Activated CD4-positive, alpha-beta memory T cell treated with anti-CD3 and anti-CD28 coated beads, Interleukin-2, amount 10 ng/mL, durations not matched to agents 7 days and 5 days (primary cell): ENCODE measurements at regions of chr11 and their contacts with region 1.

Region 1: GRCh38 chr11:48109046-48109666 is 107.5 kb upstream of the OR4B1 start:
- DNase-seq: no peak
- H3K4me3 Mint-ChIP-seq: peak overlapping the region; percentile 62
- H3K27ac Mint-ChIP-seq: peak overlapping the region; percentile 84
- H3K4me1 Mint-ChIP-seq: peaks cover 59% of the 10 kb centered on the region
- H3K27me3 Mint-ChIP-seq: no peaks in the 10 kb centered on the region

Region 2: DNA sequence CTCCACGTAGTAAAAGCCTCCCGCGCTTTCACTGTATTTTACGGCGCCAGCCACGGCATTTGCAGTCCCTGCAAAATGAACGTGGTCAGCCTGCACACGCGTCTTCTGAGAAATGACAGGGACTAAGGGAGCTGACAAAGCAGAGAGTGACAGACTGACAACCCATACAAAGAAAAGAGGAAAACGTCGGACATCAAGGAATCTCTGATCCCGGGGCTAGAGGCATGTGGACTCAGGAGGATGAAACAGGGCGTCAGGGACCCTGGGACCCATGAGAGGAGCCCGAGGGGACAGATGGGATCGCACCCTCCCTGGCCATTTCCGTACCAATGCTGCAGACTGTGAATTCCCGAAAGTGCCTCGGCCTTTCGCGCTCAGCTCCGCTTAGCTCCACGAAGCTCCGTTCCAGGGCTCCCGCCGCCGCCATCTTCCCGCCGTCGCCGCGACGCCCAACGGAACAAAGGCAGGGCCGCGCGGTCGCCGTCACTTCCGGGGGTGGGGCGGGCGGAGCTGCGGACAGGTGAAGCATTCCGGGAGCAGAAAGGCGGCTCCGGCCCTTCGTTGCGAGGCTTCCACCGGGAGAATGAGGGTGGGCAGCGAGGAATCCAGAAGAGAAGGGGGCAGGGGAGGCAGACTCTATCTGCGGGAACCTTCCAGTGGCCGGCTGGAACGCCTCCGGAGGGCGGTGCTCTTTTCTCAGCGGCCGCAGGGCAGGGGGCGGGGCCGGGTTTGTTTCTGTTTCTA is 261.1 kb before region 1 on chr11 and contains the start of gene NUP160:
- CTCF ChIA-PET with region 1: interaction called, 5 read pairs
- POLR2A ChIA-PET with region 1: interaction called, 11 read pairs
- DNase-seq: peak; percentile 91
- H3K4me3 Mint-ChIP-seq: peak within 1 kb of the TSS; percentile 89
- H3K27ac Mint-ChIP-seq: peak within 1 kb of the TSS; percentile 94
- H3K4me1 Mint-ChIP-seq: peaks cover 49% of the 10 kb centered on the region
- H3K27me3 Mint-ChIP-seq: no peaks in the 10 kb centered on the region
- total RNA-seq, gene NUP160: 52.0 to 52.9 TPM

Region 3: DNA sequence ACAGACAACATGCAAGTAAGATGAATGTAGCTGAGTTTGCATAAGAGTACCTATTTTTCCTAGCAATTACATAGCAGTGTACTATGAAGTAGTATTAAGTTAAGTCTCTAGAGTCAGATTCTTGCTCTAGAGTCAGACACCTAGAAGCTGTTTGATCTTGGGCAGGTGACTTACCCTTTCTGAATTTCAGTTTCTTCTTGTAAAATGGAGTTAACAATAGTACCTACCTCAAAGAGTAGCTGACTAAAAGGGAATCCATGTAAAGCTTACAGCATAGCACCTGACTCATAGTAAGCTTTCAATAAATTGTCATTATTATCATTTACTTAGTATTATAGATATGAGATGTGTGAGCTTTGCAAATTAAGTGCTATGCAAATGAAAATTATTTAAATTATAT is 176.6 kb before region 1 on chr11:
- CTCF ChIA-PET with region 1: interaction called, 238 read pairs
- POLR2A ChIA-PET with region 1: interaction called, 41 read pairs
- DNase-seq: no peak
- H3K4me3 Mint-ChIP-seq: no peak overlapping the region
- H3K27ac Mint-ChIP-seq: no peak overlapping the region
- H3K4me1 Mint-ChIP-seq: peaks cover 29% of the 10 kb centered on the region
- H3K27me3 Mint-ChIP-seq: no peaks in the 10 kb centered on the region

Region 4: DNA sequence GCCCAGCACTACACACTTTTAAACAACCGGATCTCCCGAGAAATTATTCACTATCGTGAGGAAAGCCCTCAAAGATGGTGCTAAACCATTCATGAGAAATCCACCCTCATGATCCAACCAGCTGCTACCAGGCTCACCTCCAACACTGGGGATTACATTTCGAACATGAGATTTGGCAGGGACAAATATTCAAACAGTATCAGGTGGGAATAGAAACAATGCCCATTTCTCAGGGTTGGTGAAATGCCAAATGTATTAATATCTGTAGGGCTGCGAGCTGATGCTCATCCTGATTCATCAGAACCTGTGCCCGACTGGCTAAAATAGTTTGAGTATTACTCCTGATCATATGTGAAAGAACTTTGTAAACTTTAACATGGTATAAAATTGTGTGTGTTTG is 144.6 kb before region 1 on chr11:
- CTCF ChIA-PET with region 1: interaction called, 26 read pairs
- POLR2A ChIA-PET with region 1: interaction called, 3 read pairs
- DNase-seq: no peak
- H3K4me3 Mint-ChIP-seq: no peak overlapping the region
- H3K27ac Mint-ChIP-seq: no peak overlapping the region
- H3K4me1 Mint-ChIP-seq: peaks cover 3% of the 10 kb centered on the region
- H3K27me3 Mint-ChIP-seq: no peaks in the 10 kb centered on the region

Region 5: GRCh38 chr11:48020092-48020755 is 88.9 kb before region 1 on chr11:
- CTCF ChIA-PET with region 1: interaction called, 20 read pairs
- POLR2A ChIA-PET with region 1: interaction called, 27 read pairs
- DNase-seq: peak; percentile 72
- H3K4me3 Mint-ChIP-seq: peak overlapping the region; percentile 62
- H3K27ac Mint-ChIP-seq: peak overlapping the region; percentile 92
- H3K4me1 Mint-ChIP-seq: peaks cover 85% of the 10 kb centered on the region
- H3K27me3 Mint-ChIP-seq: no peaks in the 10 kb centered on the region